ENCODE measurements at regions of chr3 and their contacts with region 1.

Region 1: GRCh38 chr3:15268033-15268631 is 62.1 kb downstream of the CAPN7 start:
- DNase-seq: peak; percentile 93
- ATAC-seq: peak; percentile 55
- H3K4me3 Mint-ChIP-seq: no peak overlapping the region
- H3K27ac Mint-ChIP-seq: no peak overlapping the region
- H3K4me1 Mint-ChIP-seq: peaks cover 57% of the 10 kb centered on the region
- H3K27me3 Mint-ChIP-seq: peaks cover 5% of the 10 kb centered on the region

Region 2: GRCh38 chr3:15120986-15121385 is 147.1 kb before region 1 on chr3:
- CTCF ChIA-PET with region 1: interaction called, 4 read pairs
- POLR2A ChIA-PET with region 1: no interaction called
- intact Hi-C with region 1: loop called in 1 of 2 experiments (anchors 5 kb)
- DNase-seq: no peak
- ATAC-seq: no peak
- H3K4me3 Mint-ChIP-seq: no peak overlapping the region
- H3K27ac Mint-ChIP-seq: no peak overlapping the region
- H3K4me1 Mint-ChIP-seq: peaks cover 5% of the 10 kb centered on the region
- H3K27me3 Mint-ChIP-seq: no peaks in the 10 kb centered on the region

Region 3: GRCh38 chr3:15256861-15257341 is 11.2 kb before region 1 on chr3:
- CTCF ChIA-PET with region 1: interaction called, 10 read pairs
- POLR2A ChIA-PET with region 1: no interaction called
- intact Hi-C with region 1: no loop called
- DNase-seq: no peak
- ATAC-seq: no peak
- H3K4me3 Mint-ChIP-seq: no peak overlapping the region
- H3K27ac Mint-ChIP-seq: no peak overlapping the region
- H3K4me1 Mint-ChIP-seq: peaks cover 6% of the 10 kb centered on the region
- H3K27me3 Mint-ChIP-seq: no peaks in the 10 kb centered on the region

Region 4: DNA sequence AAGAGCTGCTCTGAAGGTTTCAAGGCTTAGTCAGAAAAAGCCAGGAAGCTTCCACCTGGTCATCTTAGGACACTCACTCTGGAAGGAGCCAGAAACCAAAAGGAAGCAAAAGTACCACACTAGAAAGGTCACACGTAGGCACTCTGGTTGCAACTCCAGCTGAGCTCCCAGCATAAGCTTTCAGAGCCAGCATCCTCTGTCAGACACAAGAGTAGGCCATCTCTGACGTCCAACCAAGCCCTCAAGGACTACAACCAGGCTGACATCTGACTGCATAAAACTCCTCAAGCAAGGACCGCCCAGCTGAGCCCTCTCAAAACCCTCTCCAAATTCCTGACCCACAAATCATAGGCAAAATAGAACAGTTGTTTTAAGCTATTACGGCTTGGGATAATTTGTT is 51.4 kb after region 1 on chr3:
- CTCF ChIA-PET with region 1: interaction called, 20 read pairs
- POLR2A ChIA-PET with region 1: no interaction called
- intact Hi-C with region 1: no loop called
- DNase-seq: no peak
- ATAC-seq: no peak
- H3K4me3 Mint-ChIP-seq: no peak overlapping the region
- H3K27ac Mint-ChIP-seq: peak overlapping the region; percentile 44
- H3K4me1 Mint-ChIP-seq: peaks cover 74% of the 10 kb centered on the region
- H3K27me3 Mint-ChIP-seq: no peaks in the 10 kb centered on the region

Region 5: DNA sequence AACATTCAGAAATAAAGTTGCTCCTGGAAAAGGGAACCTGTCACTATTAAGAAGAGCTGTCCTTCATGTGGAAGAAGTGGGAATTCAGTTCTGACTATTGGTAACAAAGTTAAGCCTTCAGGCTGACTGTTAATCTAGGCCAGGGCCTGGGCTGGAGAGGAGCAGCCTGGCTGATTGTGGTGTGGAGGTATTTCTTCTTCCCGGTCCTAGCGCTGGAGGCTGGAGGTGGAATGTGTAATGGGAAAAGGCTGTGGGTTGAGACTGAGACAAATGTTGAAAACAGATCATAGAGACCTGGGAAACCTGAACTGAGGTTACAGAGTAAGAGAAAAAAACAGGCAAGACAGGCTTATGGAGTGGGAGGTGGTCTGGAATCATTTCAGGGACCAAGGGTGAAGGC is 88.1 kb after region 1 on chr3:
- CTCF ChIA-PET with region 1: interaction called, 35 read pairs
- POLR2A ChIA-PET with region 1: interaction called, 8 read pairs
- intact Hi-C with region 1: loop called (anchors 1 kb)
- DNase-seq: no peak
- ATAC-seq: no peak
- H3K4me3 Mint-ChIP-seq: no peak overlapping the region
- H3K27ac Mint-ChIP-seq: peak overlapping the region; percentile 67
- H3K4me1 Mint-ChIP-seq: peaks cover 34% of the 10 kb centered on the region
- H3K27me3 Mint-ChIP-seq: no peaks in the 10 kb centered on the region

Region 6: GRCh38 chr3:15384510-15385237 is 116.5 kb after region 1 on chr3:
- CTCF ChIA-PET with region 1: interaction called, 133 read pairs
- POLR2A ChIA-PET with region 1: no interaction called
- intact Hi-C with region 1: no loop called
- DNase-seq: no peak
- ATAC-seq: no peak
- H3K4me3 Mint-ChIP-seq: no peak overlapping the region
- H3K27ac Mint-ChIP-seq: no peak overlapping the region
- H3K4me1 Mint-ChIP-seq: no peaks in the 10 kb centered on the region
- H3K27me3 Mint-ChIP-seq: no peaks in the 10 kb centered on the region

Region 7: GRCh38 chr3:15427182-15427880 is 159.2 kb after region 1 on chr3 and contains the starts of genes EAF1 and METTL6:
- CTCF ChIA-PET with region 1: interaction called, 9 read pairs
- POLR2A ChIA-PET with region 1: no interaction called
- intact Hi-C with region 1: loop called in 1 of 2 experiments (anchors 1 kb)
- DNase-seq: peak; percentile 92
- ATAC-seq: peak; percentile 83
- H3K4me3 Mint-ChIP-seq: peak within 1 kb of the TSS; percentile 90
- H3K27ac Mint-ChIP-seq: peak within 1 kb of the TSS; percentile 97
- H3K4me1 Mint-ChIP-seq: peaks cover 45% of the 10 kb centered on the region
- H3K27me3 Mint-ChIP-seq: no peaks in the 10 kb centered on the region
- total RNA-seq, gene EAF1: 21.2 to 25.6 TPM
- total RNA-seq, gene METTL6: 13.0 to 19.5 TPM

Region 8: GRCh38 chr3:16249336-16249735 is 981.2 kb after region 1 on chr3:
- CTCF ChIA-PET with region 1: no interaction called
- POLR2A ChIA-PET with region 1: no interaction called
- intact Hi-C with region 1: no loop called
- DNase-seq: peak; percentile 62
- ATAC-seq: no peak
- H3K4me3 Mint-ChIP-seq: no peak overlapping the region
- H3K27ac Mint-ChIP-seq: no peak overlapping the region
- H3K4me1 Mint-ChIP-seq: peaks cover 8% of the 10 kb centered on the region
- H3K27me3 Mint-ChIP-seq: no peaks in the 10 kb centered on the region

Measured in activated CD4-positive, alpha-beta T cell treated with anti-CD3 and anti-CD28 coated beads for 36 hours (primary cell).